ENCODE measurements at regions of chr11 and their contacts with region 1.

Region 1: DNA sequence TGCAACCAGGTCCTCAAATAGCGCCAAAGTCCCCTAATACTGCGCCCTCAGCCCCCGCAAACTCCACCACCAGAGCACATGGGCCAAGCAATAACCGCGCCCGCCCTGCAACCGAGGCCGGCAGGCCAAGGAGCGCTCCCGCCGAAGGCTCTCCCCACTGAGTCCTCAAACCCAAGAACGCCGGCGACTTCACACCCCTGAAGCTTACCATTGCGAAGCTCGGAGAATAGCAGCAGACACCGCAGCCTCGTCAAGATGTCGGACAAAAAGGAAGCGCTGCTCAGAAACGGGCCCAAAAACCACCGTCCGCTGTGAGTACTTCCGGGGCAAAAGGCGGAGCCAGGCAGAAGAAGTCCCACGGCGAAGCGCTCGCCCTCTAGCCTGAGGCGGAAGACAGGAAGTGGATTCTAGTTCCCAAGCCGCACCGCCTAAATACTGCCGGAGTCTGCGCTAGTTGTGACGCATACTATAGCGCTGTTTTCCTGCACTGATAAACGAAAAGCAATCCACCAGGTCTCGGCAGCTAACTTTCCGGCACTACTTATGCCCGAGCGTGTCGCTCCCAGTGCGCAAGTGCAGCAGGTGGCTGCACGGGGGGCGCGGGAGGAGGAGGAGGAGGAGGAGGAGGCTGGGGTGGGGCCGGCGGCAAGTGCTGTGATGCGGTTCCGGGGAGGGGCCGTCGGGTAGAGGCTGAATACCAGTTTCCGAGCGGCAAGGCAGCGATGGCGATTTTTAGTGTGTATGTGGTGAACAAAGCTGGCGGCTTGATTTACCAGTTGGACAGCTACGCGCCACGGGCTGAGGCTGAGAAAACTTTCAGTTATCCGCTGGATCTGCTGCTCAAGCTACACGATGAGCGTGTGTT is at the starts of genes RPS25 and TRAPPC4:
- DNase-seq: peak; percentile 92
- H3K4me3 ChIP-seq: peak within 1 kb of the TSS; percentile 69 to 97
- H3K27ac ChIP-seq: peak within 1 kb of the TSS; percentile 92
- H3K4me1 ChIP-seq: peaks cover 15 to 22% of the 10 kb centered on the region in 2 experiments
- H3K27me3 ChIP-seq: no peaks in the 10 kb centered on the region
- CTCF ChIP-seq: no peak; the same call in 1 of the 2 replicates
- EP300 ChIP-seq: 0 out of 4 replicates have a peak, but pooled peaks of 1 of the 2 experiments have one; percentile 25
- RAD21 ChIP-seq: no peak
- polyA plus RNA-seq, gene RPS25: 2,335 and 2,688 TPM in 2 replicates
- polyA plus RNA-seq, gene TRAPPC4: 299 and 368 TPM in 2 replicates

Region 2: GRCh38 chr11:118895142-118896039 is 122.9 kb before region 1 on chr11:
- CTCF ChIA-PET with region 1: no interaction called
- POLR2A ChIA-PET with region 1: no interaction called
- DNase-seq: no peak
- H3K4me3 ChIP-seq: no peak overlapping the region
- H3K27ac ChIP-seq: no peak overlapping the region
- H3K4me1 ChIP-seq: no peaks in the 10 kb centered on the region; a peak in 1 of 4 replicates
- H3K27me3 ChIP-seq: no peaks in the 10 kb centered on the region
- CTCF ChIP-seq: no peak
- EP300 ChIP-seq: no peak
- RAD21 ChIP-seq: no peak

Region 3: GRCh38 chr11:119030329-119031049 is 12.2 kb after region 1 on chr11 and contains the start of gene SLC37A4:
- CTCF ChIA-PET with region 1: interaction called, 16 read pairs
- POLR2A ChIA-PET with region 1: interaction called, 6 read pairs
- DNase-seq: peak; percentile 98
- H3K4me3 ChIP-seq: peak within 1 kb of the TSS; percentile 76 to 81
- H3K27ac ChIP-seq: peak within 1 kb of the TSS in 1 of 2 experiments; percentile 74; a peak in 2 of 4 replicates
- H3K4me1 ChIP-seq: peaks cover 5 to 12% of the 10 kb centered on the region in 2 experiments; a peak in 2 of 4 replicates
- H3K27me3 ChIP-seq: no peaks in the 10 kb centered on the region
- CTCF ChIP-seq: no peak; the same call in 1 of the 2 replicates
- EP300 ChIP-seq: no peak
- RAD21 ChIP-seq: peak; percentile 61
- polyA plus RNA-seq, gene SLC37A4: 21.8 and 22.1 TPM in 2 replicates